Caco-2 (cell line): ENCODE measurements at regions of chr9 and their contacts with region 1.

Region 1: GRCh38 chr9:316382-316965 is 101.8 kb downstream of the DOCK8 start:
- DNase-seq: no peak
- H3K4me3 ChIP-seq: no peak overlapping the region
- H3K4me3 Mint-ChIP-seq: no peak overlapping the region
- H3K27ac Mint-ChIP-seq: no peak overlapping the region
- H3K4me1 ChIP-seq: no peaks in the 10 kb centered on the region
- H3K4me1 Mint-ChIP-seq: no peaks in the 10 kb centered on the region
- H3K27me3 ChIP-seq: no peaks in the 10 kb centered on the region
- H3K27me3 Mint-ChIP-seq: no peaks in the 10 kb centered on the region
- CTCF ChIP-seq: no peak

Region 2: DNA sequence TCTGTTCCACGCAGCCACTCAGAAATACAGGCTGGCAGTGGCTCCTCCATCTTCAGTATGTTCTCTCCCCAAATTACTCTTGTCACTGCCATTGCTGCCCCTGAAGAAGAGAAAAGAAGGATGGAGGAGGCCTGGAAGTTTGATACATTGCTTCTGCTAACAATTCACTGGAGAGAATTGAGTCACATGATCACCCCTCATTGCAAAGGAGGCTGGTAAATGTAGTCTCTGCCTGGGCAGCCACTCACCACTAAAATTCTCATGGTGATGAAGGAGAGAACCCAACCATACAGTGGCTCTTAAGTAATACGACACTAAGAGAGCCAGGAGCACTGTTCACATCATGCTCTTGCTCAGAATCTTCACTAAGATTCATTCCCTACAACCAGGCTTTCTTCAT is 10.2 kb after region 1 on chr9:
- CTCF ChIA-PET with region 1: no interaction called
- POLR2A ChIA-PET with region 1: no interaction called
- intact Hi-C with region 1: loop called (anchors 1 kb)
- DNase-seq: no peak
- H3K4me3 ChIP-seq: no peak overlapping the region
- H3K4me3 Mint-ChIP-seq: no peak overlapping the region
- H3K27ac Mint-ChIP-seq: no peak overlapping the region
- H3K4me1 ChIP-seq: no peaks in the 10 kb centered on the region
- H3K4me1 Mint-ChIP-seq: peaks cover 7% of the 10 kb centered on the region
- H3K27me3 ChIP-seq: no peaks in the 10 kb centered on the region
- H3K27me3 Mint-ChIP-seq: no peaks in the 10 kb centered on the region
- CTCF ChIP-seq: no peak